ENCODE measurements at regions of chr6 and their contacts with region 1.

Region 1: GRCh38 chr6:34887753-34888513 is at the start of gene TAF11:
- DNase-seq: peak; percentile 85 to 98
- H3K4me3 ChIP-seq: peak within 1 kb of the TSS; percentile 77 to 91
- H3K27ac ChIP-seq: peak within 1 kb of the TSS; percentile 82 to 96
- H3K4me1 ChIP-seq: peaks cover 0 to 7% of the 10 kb centered on the region in 2 donors
- H3K27me3 ChIP-seq: no peaks in the 10 kb centered on the region
- CTCF ChIP-seq: no peak
- total RNA-seq, gene TAF11: 0.85 TPM

Region 2: GRCh38 chr6:34757687-34758274 is 130.2 kb before region 1 on chr6:
- intact Hi-C with region 1: loop called (anchors 1 kb)
- DNase-seq: no peak
- H3K4me3 ChIP-seq: peak overlapping the region; percentile 84 to 87
- H3K27ac ChIP-seq: peak overlapping the region; percentile 88 to 92
- H3K4me1 ChIP-seq: peaks cover 3 to 7% of the 10 kb centered on the region in 2 donors
- H3K27me3 ChIP-seq: no peaks in the 10 kb centered on the region
- CTCF ChIP-seq: no peak

Region 3: GRCh38 chr6:34791701-34792235 is 96.2 kb before region 1 on chr6 and contains the start of gene BLTP3A:
- intact Hi-C with region 1: loop called (anchors 5 kb)
- DNase-seq: peak in 1 of 2 donors; percentile 79
- H3K4me3 ChIP-seq: peak within 1 kb of the TSS; percentile 88 to 99
- H3K27ac ChIP-seq: peak within 1 kb of the TSS; percentile 95 to 96
- H3K4me1 ChIP-seq: peaks cover 0 to 8% of the 10 kb centered on the region in 2 donors
- H3K27me3 ChIP-seq: no peaks in the 10 kb centered on the region
- CTCF ChIP-seq: peak in 1 of 3 experiments; percentile 25
- total RNA-seq, gene BLTP3A: 12.7 TPM

Region 4: GRCh38 chr6:34829137-34829536 is 58.8 kb before region 1 on chr6:
- intact Hi-C with region 1: no loop called
- DNase-seq: no peak
- H3K4me3 ChIP-seq: no peak overlapping the region
- H3K27ac ChIP-seq: no peak overlapping the region
- H3K4me1 ChIP-seq: no peaks in the 10 kb centered on the region
- H3K27me3 ChIP-seq: no peaks in the 10 kb centered on the region
- CTCF ChIP-seq: no peak

Region 5: GRCh38 chr6:34855463-34855862 is 32.5 kb before region 1 on chr6:
- intact Hi-C with region 1: no loop called
- DNase-seq: no peak
- H3K4me3 ChIP-seq: no peak overlapping the region
- H3K27ac ChIP-seq: no peak overlapping the region
- H3K4me1 ChIP-seq: no peaks in the 10 kb centered on the region
- H3K27me3 ChIP-seq: no peaks in the 10 kb centered on the region
- CTCF ChIP-seq: no peak

Region 6: DNA sequence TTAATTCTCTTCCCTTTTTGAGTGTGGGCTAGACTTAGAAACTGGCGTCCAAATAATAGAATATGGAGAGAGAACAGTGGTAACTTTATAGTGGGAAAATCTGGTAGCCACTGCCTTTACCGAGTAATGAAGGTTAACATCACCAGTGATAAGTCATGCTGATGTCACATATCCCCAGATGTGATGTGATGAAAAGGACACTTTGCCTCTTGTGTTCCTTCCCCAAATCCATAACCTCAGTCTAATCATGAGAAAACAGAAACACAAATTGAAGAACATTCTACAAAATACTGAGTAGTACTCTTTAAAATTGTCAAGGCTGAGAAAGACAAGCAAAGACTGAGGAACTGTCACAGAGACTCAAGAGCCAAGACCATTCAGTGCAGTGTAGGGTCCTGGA is 18.9 kb after region 1 on chr6:
- intact Hi-C with region 1: no loop called
- DNase-seq: no peak
- H3K4me3 ChIP-seq: no peak overlapping the region
- H3K27ac ChIP-seq: no peak overlapping the region
- H3K4me1 ChIP-seq: peaks cover 0 to 19% of the 10 kb centered on the region in 2 donors
- H3K27me3 ChIP-seq: no peaks in the 10 kb centered on the region
- CTCF ChIP-seq: no peak

Region 7: GRCh38 chr6:34917626-34918285 is 29.8 kb after region 1 on chr6:
- intact Hi-C with region 1: loop called (anchors 2 kb)
- DNase-seq: no peak
- H3K4me3 ChIP-seq: no peak overlapping the region
- H3K27ac ChIP-seq: peak overlapping the region; percentile 81 to 92
- H3K4me1 ChIP-seq: peaks cover 13 to 52% of the 10 kb centered on the region in 2 donors
- H3K27me3 ChIP-seq: no peaks in the 10 kb centered on the region
- CTCF ChIP-seq: no peak

Region 8: DNA sequence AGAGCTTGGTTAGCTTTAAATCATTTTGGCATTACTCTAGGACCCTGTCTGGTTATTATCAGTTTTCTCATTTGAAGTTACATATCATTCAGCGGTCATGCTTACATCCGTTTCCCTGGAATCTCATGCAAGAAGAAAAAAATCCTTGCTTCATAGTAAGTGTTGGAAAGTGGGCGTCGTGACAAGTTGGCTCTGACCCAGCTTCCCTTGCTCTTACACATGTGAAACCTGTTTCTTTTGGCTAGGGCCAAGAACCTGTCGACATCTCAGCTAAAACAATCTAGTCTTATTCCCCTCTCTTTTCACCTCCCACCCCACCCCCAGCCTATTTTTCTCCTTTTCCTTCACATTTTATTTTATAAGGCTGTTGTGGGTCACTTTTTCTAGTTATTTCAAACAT is 46.6 kb after region 1 on chr6:
- intact Hi-C with region 1: loop called (anchors 5 kb)
- DNase-seq: peak; percentile 54 to 94
- H3K4me3 ChIP-seq: no peak overlapping the region
- H3K27ac ChIP-seq: no peak overlapping the region
- H3K4me1 ChIP-seq: peaks cover 3 to 12% of the 10 kb centered on the region in 2 donors
- H3K27me3 ChIP-seq: no peaks in the 10 kb centered on the region
- CTCF ChIP-seq: no peak

Region 9: DNA sequence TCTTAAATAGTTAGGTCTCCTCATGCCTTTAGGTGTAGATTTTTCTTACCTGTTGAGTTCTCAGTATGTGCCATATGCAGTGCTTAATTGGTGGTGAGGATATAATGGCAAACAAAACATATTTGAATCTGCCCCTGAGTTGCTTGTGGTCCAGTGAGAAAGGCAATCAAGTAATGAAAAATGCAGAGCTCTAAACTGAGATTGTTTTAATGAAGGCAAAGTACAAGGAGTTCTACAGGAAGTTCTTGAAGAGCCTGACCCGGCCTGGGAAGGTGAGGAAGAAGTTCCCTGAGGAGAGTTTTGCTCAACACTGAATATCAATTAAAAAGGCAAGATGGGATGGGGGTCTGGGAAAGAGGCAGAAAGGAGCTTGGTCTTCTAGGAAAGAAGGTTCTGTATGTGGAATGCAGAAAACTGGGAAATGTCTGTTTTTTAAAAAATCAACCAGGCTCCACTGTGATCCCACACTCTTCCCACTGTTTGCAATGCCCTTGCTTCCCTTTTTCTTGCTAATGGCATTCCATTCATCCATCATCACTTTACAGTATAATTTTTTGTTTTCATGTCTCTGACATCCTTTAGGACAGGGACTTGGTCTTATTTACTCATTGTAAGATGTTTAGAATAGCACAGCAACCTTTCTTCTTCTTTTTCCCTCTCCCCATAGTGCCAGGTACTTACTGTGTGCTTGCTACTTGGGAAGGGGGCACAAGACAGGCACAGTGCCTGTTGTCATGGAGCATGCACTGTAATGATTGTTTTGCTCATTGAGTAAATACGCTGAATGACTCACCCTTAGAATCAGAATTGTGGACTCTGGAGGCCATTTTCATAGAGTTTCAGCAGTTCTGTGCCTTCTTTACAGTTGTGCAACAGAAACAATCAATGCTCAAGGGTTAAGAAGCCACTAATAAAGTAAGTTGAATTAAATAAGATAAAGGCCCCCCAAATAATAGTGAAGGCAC is 65.4 kb after region 1 on chr6:
- intact Hi-C with region 1: no loop called
- DNase-seq: no peak
- H3K4me3 ChIP-seq: no peak overlapping the region
- H3K27ac ChIP-seq: no peak overlapping the region
- H3K4me1 ChIP-seq: no peaks in the 10 kb centered on the region
- H3K27me3 ChIP-seq: no peaks in the 10 kb centered on the region
- CTCF ChIP-seq: no peak

Region 10: GRCh38 chr6:35139908-35140655 is 252.1 kb after region 1 on chr6:
- intact Hi-C with region 1: loop called (anchors 5 kb)
- DNase-seq: no peak
- H3K4me3 ChIP-seq: no peak overlapping the region
- H3K27ac ChIP-seq: no peak overlapping the region
- H3K4me1 ChIP-seq: peaks cover 0 to 4% of the 10 kb centered on the region in 2 donors
- H3K27me3 ChIP-seq: no peaks in the 10 kb centered on the region
- CTCF ChIP-seq: peak; percentile 75 to 87 (median 84)

Region 11: DNA sequence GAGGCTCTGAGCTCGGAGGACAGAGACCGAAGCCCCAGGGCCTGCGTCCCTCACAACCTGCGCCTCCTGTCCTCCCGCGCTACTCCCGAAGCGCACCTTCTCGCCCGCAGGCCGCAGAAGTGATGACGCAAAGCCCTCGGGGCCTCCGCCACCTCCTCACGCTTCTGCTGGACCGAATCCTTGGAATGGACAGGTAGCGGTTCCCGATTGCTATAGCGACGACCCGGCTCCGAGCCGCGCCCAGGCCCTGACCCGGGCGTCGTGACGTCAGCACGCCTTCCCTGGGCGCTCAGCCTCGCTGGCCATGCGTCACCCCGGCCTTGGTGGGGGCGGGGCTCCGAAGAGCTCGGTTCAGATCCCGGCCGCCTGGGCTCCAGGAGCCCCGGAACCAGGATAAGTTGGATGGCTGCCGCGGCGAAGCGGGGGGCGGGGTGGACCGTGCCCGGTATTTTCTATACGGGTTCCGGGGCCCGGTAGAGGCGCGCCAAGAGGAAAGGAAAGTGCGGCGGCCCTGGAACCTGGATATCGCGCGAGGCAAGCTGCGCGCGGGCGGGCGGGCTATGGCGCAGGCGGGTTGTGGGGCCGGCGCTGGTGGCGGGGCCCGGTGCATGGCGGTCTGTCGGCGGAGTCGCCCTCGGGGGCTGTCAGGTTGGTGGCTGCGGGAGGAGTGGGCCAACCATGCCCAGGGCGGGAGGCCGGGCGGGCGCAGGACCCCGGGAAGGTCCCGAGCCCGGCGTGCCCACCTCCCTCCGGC is 371.4 kb after region 1 on chr6 and contains the start of gene ZNF76:
- intact Hi-C with region 1: loop called (anchors 1 kb)
- DNase-seq: peak; percentile 90 to 99
- H3K4me3 ChIP-seq: peak within 1 kb of the TSS; percentile 77 to 89
- H3K27ac ChIP-seq: peak within 1 kb of the TSS; percentile 97 to 98
- H3K4me1 ChIP-seq: peaks cover 0 to 8% of the 10 kb centered on the region in 2 donors
- H3K27me3 ChIP-seq: no peaks in the 10 kb centered on the region
- CTCF ChIP-seq: peak in 1 of 3 experiments; percentile 87
- total RNA-seq, gene ZNF76: 55.7 TPM